Esophagus squamous epithelium (tissue), 5 donors: ENCODE measurements at regions of chr2 and their contacts with region 1.

Region 1: GRCh38 chr2:95022309-95023221 is 2.9 kb upstream of the MAL start:
- DNase-seq: no peak
- H3K4me3 ChIP-seq: peak overlapping the region in 2 of 4 donors; percentile 3 to 9
- H3K27ac ChIP-seq: peak overlapping the region; percentile 67 to 91 (median 88)
- H3K4me1 ChIP-seq: peaks cover 20 to 100% (median 46%) of the 10 kb centered on the region in 3 donors
- H3K27me3 ChIP-seq: peaks cover 0 to 63% (median 4%) of the 10 kb centered on the region in 4 donors
- CTCF ChIP-seq: peak; percentile 71 to 98 (median 95)
- POLR2A ChIP-seq: no peak

Region 2: DNA sequence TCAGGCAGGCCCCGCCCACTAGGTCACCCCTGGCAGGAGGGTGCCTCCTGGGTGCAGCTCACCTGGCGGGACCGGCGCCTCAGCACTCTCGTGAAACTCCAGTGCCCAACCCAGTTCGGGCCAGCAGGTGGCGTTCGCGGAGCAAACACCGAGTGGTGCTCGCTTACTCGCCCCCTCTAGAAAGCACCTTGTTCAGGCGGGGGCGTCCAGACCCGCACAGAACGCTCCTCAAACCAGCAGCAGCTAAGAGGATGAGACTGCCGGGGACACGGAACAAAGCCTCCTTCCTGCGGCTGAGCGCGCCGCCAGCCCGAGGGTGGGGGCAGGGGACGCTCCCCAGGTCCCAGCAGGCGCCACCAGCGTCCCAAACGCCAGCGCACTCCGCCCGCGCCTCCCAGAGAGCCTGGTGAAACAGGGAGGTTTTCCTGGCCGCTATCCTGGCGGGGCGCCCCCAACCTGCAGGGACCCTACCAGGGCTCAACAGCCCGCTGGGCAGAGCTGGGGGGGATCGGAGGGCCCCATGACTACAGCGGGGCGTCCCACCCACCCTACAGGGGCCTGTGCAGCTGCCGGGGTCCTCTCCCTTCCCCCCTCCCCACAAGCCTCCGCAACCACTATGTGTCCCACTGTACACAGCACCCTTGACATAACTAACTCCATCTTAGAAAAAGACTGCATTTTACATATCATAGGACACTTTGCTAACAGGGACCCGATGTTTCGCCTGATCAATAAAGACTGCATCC is 54.4 kb after region 1 on chr2:
- intact Hi-C with region 1: loop called (anchors 5 kb)
- DNase-seq: no peak
- H3K4me3 ChIP-seq: peak overlapping the region; percentile 23 to 67 (median 49)
- H3K27ac ChIP-seq: peak overlapping the region in 3 of 4 donors; percentile 32 to 76 (median 56)
- H3K4me1 ChIP-seq: peaks cover 5 to 36% (median 12%) of the 10 kb centered on the region in 3 donors
- H3K27me3 ChIP-seq: peaks cover 0 to 48% (median 0%) of the 10 kb centered on the region in 4 donors
- CTCF ChIP-seq: peak; percentile 62 to 89 (median 82)
- POLR2A ChIP-seq: no peak

Region 3: DNA sequence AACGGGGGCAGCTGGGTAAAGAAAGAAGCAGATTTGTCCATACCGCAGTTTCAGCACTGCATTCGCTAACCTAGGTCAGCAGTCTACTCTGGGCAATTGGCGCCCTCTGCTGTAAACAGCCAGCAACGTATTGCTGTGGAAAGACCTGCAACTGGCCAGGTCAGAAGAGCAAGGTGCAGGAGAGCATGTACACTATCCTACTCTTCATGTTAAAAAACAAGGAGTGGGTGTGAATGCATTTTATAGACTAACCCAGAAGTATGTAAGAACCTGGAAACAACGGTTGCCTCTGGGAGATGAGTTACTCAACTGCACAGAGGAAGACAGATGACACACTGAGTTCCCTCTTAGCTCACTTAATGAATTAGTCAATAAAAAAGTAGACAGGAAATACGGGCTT is 92.9 kb after region 1 on chr2:
- intact Hi-C with region 1: loop called (anchors 5 kb)
- DNase-seq: no peak
- H3K4me3 ChIP-seq: no peak overlapping the region
- H3K27ac ChIP-seq: no peak overlapping the region
- H3K4me1 ChIP-seq: peaks cover 0 to 40% (median 12%) of the 10 kb centered on the region in 3 donors
- H3K27me3 ChIP-seq: no peaks in the 10 kb centered on the region
- CTCF ChIP-seq: peak; percentile 42 to 78 (median 72)
- POLR2A ChIP-seq: no peak

Region 4: DNA sequence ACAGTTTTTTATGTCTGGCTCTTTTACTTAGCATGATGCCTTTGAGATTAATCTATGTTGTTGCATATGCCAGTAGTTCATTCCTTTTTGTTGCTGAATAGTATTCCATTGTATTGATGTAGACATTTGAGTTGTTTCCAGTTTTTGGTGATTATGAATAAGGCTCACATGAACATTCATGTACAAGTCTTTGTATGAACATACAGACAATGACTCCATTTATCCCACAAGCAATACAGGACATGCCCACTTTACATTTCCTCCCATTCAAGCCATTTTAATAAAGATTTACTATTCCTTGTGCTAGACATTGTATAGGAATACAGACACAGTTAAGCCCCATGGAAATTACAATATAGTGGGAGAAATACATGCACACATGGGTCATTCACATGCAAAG is 687.3 kb after region 1 on chr2:
- intact Hi-C with region 1: no loop called
- DNase-seq: no peak
- H3K4me3 ChIP-seq: no peak overlapping the region
- H3K27ac ChIP-seq: no peak overlapping the region
- H3K4me1 ChIP-seq: no peaks in the 10 kb centered on the region
- H3K27me3 ChIP-seq: no peaks in the 10 kb centered on the region
- CTCF ChIP-seq: no peak
- POLR2A ChIP-seq: no peak